Left lung (tissue), 14 donors: ENCODE measurements at regions of chr12 and their contacts with region 1.

Region 1: DNA sequence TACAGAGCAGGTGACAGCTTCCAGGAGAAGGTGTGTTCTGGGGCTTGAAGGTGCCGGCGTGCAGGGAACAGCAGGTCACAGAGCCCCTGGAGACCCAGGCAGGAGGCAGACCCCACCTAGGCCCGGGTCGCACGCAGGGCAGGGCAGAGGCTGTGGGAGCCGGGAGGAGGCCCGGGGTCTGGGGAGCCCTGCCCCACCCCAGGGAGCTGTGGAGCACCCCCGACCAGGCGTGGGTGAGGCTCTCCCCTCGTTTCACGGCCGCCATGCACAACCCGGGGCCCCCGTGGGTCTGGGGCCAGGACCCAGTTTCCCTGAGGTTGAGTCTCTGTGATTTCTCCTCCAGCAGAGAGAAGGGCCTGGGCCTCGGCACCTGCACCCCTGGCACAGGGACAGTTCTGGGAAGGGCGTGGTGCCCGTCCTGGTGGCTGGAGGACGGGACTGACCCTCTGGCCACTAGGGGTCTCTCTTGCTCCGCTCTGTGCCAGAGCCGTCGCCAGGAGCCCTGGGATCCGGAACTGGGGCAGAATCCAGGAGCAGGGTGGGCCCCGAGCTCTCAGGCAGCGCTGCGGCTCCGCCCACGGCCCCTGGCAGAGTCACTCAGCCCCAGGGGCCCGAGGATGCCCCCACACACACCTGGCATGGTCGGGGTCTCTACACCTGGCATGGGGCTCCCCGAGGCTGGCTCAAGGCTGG is 75.2 kb upstream of the FBRSL1 start:
- DNase-seq: peak in 3 of 4 donors; percentile 72 to 91 (median 82)
- ATAC-seq: peak; percentile 99
- H3K4me3 ChIP-seq: no peak overlapping the region
- H3K27ac ChIP-seq: no peak overlapping the region
- H3K4me1 ChIP-seq: peaks cover 0 to 6% of the 10 kb centered on the region in 2 donors
- H3K27me3 ChIP-seq: peaks cover 0 to 73% of the 10 kb centered on the region in 2 donors
- CTCF ChIP-seq: peak; percentile 87 to 93

Region 2: DNA sequence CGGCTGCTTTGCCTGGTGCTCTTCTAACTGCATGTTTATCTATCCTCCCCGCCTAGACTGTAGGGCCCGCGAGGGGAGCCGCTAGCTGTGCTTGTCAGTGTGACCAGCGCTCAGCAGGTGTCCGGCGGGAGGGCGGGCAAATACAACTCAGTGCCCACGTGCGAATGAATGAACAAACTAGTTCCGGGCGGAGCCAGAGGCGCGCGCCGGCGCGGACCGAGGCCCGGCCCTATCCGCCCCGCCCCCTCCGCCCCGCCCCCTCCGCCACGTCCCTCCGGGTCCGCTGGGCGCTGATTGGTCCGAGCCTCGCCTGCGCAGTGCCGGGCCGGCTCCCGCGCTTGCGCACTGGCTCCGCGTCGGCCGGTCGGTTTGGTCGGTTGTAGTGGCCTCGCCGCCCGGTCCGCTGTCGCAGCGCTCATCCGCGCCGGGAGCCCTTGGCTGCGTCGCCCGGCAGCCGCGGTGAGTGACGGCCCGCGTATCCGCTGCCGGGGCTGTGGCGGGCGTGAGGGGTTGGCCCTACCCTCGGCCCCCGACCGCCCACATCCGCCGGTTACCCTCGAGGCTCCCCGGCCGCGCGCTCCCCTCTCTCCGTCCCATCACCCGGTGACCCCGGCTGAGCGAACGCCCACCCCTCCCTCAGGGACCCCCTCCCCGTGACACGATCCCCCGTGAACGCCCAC is 330.7 kb before region 1 on chr12:
- intact Hi-C with region 1: no loop called
- DNase-seq: peak; percentile 83 to 97 (median 92)
- ATAC-seq: peak; percentile 95
- H3K4me3 ChIP-seq: peak overlapping the region; percentile 82 to 94
- H3K27ac ChIP-seq: peak overlapping the region; percentile 81 to 88
- H3K4me1 ChIP-seq: peaks cover 0 to 23% of the 10 kb centered on the region in 2 donors
- H3K27me3 ChIP-seq: no peaks in the 10 kb centered on the region
- CTCF ChIP-seq: peak in 1 of 2 donors; percentile 12

Region 3: DNA sequence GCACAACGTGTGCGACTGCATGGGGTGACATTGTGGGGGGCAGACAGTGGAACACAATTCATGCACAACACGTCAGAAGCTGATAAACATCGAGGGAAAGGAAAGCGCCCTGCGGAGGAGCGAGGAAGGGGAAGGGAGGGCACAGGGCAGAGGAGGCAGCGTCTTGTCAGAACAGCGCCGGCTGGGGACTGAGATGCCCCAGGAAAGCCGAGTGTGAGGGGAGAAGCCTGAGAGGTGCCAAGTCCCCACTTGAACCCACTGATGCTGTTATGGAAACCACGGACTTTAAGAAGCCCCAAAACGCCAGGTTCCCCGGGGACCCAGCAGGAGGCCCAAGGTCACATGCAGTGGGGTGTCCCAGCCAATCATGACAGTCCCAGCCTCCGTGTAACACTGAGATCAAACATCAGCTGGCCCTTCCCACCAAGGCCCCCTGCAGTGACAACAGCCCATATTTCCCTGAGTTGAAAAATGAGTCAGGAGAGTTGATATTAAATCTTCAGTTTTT is 155.4 kb before region 1 on chr12:
- intact Hi-C with region 1: no loop called
- DNase-seq: peak in 1 of 4 donors; percentile 54
- ATAC-seq: no peak
- H3K4me3 ChIP-seq: no peak overlapping the region
- H3K27ac ChIP-seq: no peak overlapping the region
- H3K4me1 ChIP-seq: no peaks in the 10 kb centered on the region
- H3K27me3 ChIP-seq: peaks cover 0 to 59% of the 10 kb centered on the region in 2 donors
- CTCF ChIP-seq: no peak

Region 4: DNA sequence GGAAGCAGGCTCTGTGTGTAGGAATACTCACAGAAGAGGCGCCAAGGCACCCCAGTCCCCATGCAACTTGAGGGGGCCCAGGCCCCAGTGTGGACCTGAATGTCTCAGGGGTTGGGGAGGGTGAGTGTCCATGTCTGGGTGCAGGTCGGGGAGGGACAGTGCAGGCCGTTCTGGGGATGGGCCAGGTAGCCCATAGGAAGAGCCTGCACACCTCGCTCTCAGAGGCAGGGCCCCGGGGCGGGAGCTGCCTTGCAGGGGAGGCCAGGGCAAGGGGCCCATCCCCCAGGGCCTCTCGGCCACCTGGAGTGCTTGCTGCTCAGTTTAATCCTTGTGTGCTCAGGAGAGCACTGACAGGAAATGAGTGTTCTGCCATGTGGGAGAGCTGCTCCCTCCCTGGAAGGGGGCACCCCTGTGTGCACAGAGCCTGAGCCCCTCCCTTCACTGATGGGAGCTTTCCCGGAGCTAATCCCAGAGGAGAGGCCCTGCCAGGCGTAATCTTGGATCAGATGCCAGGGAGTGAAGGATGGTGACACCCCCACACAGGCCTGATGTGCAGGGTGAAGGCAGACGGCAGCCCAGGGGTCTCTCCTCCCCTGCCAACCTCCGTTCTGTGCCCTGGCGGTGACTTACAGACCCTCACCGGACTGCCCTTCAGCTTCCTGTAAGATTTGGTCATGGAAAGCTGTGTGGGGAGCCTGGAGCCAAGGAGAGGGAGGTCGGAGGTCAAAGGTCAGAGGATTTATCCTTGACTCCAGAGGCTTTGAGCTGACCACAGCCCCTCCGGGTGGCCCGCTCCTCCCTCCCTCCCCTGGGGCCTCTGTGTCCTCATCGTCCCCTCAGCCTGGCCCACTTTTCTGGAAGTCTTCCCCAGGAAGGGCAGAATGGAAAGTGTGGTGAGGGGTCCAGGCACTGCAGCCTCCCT is 50.8 kb after region 1 on chr12:
- intact Hi-C with region 1: no loop called
- DNase-seq: peak in 1 of 4 donors; percentile 71
- ATAC-seq: no peak
- H3K4me3 ChIP-seq: no peak overlapping the region
- H3K27ac ChIP-seq: no peak overlapping the region
- H3K4me1 ChIP-seq: no peaks in the 10 kb centered on the region
- H3K27me3 ChIP-seq: peaks cover 0 to 56% of the 10 kb centered on the region in 2 donors
- CTCF ChIP-seq: no peak

Region 5: GRCh38 chr12:132523576-132524331 is 109.0 kb after region 1 on chr12:
- intact Hi-C with region 1: no loop called
- DNase-seq: peak; percentile 48 to 92 (median 70)
- ATAC-seq: peak; percentile 76
- H3K4me3 ChIP-seq: no peak overlapping the region
- H3K27ac ChIP-seq: no peak overlapping the region
- H3K4me1 ChIP-seq: peaks cover 0 to 27% of the 10 kb centered on the region in 2 donors
- H3K27me3 ChIP-seq: no peaks in the 10 kb centered on the region
- CTCF ChIP-seq: peak; percentile 87 to 91

Region 6: DNA sequence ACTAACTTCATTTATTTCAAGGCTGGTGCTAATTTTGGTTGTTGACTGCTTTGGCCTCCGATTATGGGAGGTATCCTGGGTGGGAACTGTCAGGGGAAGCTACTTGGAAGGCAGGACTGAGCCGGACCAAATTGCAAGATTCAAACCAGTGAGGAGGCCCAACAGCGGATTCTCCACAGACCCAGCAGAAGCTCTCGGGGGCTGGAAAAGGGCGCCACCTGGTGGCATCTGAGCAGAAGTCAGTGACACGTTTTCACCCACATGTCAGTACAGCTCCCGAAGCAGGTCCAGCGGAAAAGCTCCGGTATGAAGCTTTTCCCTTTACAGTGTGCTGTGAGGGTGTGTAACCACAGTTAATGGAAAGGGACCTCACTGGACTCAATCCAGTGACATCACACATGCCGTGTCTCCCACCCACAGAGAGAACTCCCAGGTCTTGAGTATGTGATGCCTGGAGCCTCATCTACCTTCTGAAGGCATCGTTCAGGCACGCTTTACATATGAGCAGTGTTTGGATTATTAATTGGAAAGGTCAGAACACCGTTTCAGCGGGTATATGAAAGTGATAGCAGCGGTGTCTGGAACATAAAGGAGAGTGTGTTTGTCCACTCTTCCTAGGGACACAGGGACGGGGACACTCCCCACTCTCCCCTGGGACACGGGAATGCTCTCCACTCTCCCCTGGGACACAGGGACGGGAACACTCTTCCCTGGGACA is 200.2 kb after region 1 on chr12:
- intact Hi-C with region 1: loop called in 1 of 2 experiments (anchors 5 kb)
- DNase-seq: peak in 3 of 4 donors; percentile 74 to 90 (median 89)
- ATAC-seq: peak; percentile 90
- H3K4me3 ChIP-seq: no peak overlapping the region
- H3K27ac ChIP-seq: no peak overlapping the region
- H3K4me1 ChIP-seq: peaks cover 2 to 5% of the 10 kb centered on the region in 2 donors
- H3K27me3 ChIP-seq: peaks cover 26 to 64% of the 10 kb centered on the region in 2 donors
- CTCF ChIP-seq: peak; percentile 86 to 89